Body of pancreas (tissue), 4 donors: ENCODE measurements at regions of chr10 and their contacts with region 1.

Region 1: GRCh38 chr10:126504063-126504739 is 115.9 kb upstream of the ADAM12 start:
- DNase-seq: peak; percentile 30 to 56 (median 41)
- ATAC-seq: peak; percentile 79
- H3K4me3 ChIP-seq: no peak overlapping the region
- H3K27ac ChIP-seq: no peak overlapping the region
- H3K4me1 ChIP-seq: no peaks in the 10 kb centered on the region
- H3K27me3 ChIP-seq: no peaks in the 10 kb centered on the region
- CTCF ChIP-seq: peak; percentile 36 to 79 (median 70)
- POLR2A ChIP-seq: no peak

Region 2: DNA sequence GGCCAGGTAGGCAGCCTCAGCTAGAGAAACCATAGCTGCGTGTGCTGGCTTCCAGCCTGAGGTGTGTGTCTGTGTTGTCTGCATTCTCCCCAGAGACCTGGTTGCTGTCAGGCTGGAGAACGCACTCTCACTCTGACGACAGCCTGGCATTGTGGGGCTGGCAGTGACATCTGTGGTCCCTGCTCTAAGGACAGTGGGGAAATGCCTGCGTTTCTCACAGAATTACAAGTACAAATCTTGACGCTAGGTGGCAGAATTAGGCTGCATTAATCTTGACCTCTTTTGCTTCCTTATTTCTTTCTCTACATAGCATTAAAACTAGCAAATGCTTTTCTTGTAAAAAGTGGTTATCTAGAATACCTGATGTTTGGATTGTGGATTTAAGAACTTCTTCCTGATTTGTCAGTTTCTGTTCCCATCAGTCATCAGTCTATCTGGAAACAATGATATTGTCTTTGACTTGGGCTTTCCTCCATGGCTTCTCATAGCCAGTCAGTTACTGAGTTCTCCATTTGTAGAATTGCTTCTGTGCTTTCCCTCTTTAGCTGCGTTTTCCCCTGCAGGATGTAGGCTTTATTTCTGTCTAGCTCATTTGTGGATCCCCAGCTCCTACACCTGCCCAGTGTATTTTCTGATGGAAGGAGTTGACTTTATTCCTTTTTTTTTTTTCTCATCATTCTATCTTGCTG is 521.8 kb before region 1 on chr10:
- intact Hi-C with region 1: loop called (anchors 5 kb)
- DNase-seq: peak in 3 of 4 donors; percentile 43 to 57 (median 45)
- ATAC-seq: peak; percentile 62
- H3K4me3 ChIP-seq: no peak overlapping the region
- H3K27ac ChIP-seq: no peak overlapping the region
- H3K4me1 ChIP-seq: no peaks in the 10 kb centered on the region
- H3K27me3 ChIP-seq: no peaks in the 10 kb centered on the region
- CTCF ChIP-seq: peak in 6 of 7 experiments; percentile 53 to 81 (median 74)
- POLR2A ChIP-seq: no peak